HEK293 (cell line): ENCODE measurements at regions of chr7 and their contacts with region 1.

Region 1: GRCh38 chr7:90629297-90629918 is 33.3 kb downstream of the CDK14 start:
- H3K4me3 ChIP-seq: no peak overlapping the region
- H3K27ac ChIP-seq: no peak overlapping the region
- H3K4me1 ChIP-seq: peaks cover 5% of the 10 kb centered on the region; the same call in 1 of the 2 replicates
- CTCF ChIP-seq: no peak

Region 2: DNA sequence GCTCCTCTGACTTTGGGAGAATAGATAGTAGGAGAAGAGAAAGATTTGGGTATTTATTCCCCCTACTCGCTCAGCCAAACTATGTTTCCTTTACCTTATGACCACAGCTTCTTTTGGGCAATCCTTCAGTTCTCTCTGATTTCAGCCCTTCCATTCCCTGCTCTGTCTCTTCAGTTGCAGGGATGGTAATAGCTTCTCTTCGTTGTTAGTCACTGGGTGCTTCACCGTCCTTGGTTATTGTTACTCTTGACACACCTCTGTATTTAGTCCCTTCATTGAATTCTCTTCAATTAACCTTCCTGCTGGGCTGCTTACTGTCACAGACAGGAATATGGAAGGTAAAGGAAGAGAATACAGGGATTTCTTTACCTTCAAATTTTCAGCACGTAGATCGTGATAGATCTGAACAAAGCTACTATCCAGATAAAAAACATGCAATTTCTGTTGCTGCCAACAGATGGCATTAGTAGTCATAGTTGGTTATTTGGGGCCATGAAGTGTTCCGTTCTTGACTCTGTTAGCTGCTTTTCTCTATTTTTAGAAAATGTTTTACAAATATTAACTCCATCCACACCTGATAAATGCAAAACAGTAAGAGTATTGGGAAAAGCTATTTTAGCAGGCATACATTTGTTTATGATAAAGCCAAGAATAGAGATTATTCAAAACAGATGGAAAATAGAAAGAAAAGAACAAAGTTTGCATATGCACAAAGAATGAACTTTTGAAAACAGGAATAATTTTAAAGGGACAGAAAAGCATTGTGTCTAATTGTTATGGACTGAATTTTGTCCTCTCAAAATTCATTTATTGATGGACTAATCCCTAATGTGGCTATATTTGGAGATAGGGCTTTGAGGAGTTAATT is 174.0 kb before region 1 on chr7:
- CTCF ChIA-PET with region 1: interaction called, 16 read pairs
- POLR2A ChIA-PET with region 1: no interaction called
- H3K4me3 ChIP-seq: no peak overlapping the region; the same call in none of the 2 replicates
- H3K27ac ChIP-seq: no peak overlapping the region
- H3K4me1 ChIP-seq: no peaks in the 10 kb centered on the region
- CTCF ChIP-seq: no peak

Region 3: GRCh38 chr7:90595801-90596671 is 33.4 kb before region 1 on chr7 and contains the start of gene CDK14:
- CTCF ChIA-PET with region 1: interaction called, 19 read pairs
- POLR2A ChIA-PET with region 1: interaction called, 10 read pairs
- H3K4me3 ChIP-seq: peak within 1 kb of the TSS; percentile 89
- H3K27ac ChIP-seq: peak within 1 kb of the TSS; percentile 73
- H3K4me1 ChIP-seq: peaks cover 13% of the 10 kb centered on the region
- CTCF ChIP-seq: peak; percentile 32; the same call in 1 of the 2 replicates

Region 4: GRCh38 chr7:90603326-90603725 is 26.1 kb before region 1 on chr7:
- CTCF ChIA-PET with region 1: interaction called, 18 read pairs
- POLR2A ChIA-PET with region 1: no interaction called
- H3K4me3 ChIP-seq: no peak overlapping the region
- H3K27ac ChIP-seq: no peak overlapping the region
- H3K4me1 ChIP-seq: peaks cover 11% of the 10 kb centered on the region
- CTCF ChIP-seq: no peak